Esophagus muscularis mucosa (tissue), 4 donors: ENCODE measurements at regions of chr1 and their contacts with region 1.

Region 1: DNA sequence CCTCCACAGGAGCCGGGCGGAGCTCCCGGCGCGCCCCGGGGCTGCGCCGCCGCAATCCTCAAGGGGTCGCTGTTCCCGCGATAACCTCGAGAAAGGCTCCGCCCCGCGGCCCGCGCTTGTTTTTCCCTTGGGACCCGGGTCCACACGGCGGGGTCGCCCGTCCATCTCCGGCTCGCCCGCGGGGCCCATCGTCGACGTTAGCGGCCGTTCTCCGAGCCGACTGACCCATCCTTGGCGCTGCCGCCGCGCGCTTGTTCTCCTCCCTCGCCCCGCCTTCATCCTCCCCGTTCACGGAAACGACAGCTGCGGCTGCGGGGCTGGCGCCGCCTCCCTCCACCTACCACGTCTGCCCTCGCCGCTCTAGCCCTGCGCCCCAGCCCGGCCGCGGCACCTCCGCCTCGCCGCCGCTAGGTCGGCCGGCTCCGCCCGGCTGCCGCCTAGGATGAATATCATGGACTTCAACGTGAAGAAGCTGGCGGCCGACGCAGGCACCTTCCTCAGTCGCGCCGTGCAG is at the start of gene SH3GLB1:
- DNase-seq: peak; percentile 97
- H3K4me3 ChIP-seq: peak within 1 kb of the TSS; percentile 74 to 95 (median 94)
- H3K27ac ChIP-seq: peak within 1 kb of the TSS; percentile 91 to 98 (median 98)
- H3K4me1 ChIP-seq: peaks cover 36 to 49% (median 46%) of the 10 kb centered on the region in 4 donors
- H3K27me3 ChIP-seq: no peaks in the 10 kb centered on the region
- CTCF ChIP-seq: peak; percentile 83 to 94 (median 89)
- EP300 ChIP-seq: no peak
- POLR2A ChIP-seq: peak; percentile 4
- total RNA-seq, gene SH3GLB1: 56.2 to 73.1 (median 61.8) TPM

Region 2: DNA sequence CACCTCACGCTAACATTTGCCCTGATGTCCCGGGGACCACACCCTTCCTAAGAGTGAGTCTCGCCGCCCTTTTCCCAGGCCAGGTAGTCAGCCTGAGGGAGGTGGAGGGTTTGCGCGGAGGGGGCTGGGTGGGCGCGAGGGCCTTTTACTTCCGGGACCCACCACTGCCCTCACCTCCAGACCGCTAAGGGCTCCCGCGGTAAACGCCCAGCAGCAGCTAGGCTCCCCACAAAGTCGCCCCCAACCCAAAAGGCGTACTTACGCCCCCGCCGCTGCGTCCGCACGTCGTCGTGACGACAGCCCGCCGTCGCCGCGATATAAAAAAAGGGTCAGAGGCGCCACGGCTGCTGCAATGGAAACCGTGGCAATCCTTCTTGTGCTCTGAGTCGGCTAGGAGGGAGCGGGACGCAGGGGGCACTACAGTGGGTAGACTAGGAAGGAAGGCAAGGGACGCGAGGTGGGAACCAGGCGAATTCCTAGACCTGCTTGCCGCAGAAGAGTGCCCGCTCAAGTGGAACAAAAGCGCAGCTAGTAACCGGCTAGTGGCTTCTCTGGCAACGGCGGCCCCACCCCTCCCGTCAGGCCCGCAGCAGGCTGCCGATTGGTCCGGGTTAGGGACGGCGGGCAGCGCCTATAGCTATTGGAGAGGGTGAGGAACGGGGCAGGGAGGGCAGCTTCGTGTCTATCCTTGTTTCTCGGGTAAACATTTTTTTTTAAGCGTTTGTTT is 308.6 kb before region 1 on chr1 and contains the start of gene ODF2L:
- intact Hi-C with region 1: loop called (anchors 10 kb)
- DNase-seq: peak; percentile 97
- H3K4me3 ChIP-seq: peak within 1 kb of the TSS; percentile 79 to 93 (median 90)
- H3K27ac ChIP-seq: peak within 1 kb of the TSS; percentile 76 to 81 (median 79)
- H3K4me1 ChIP-seq: peaks cover 5 to 35% (median 28%) of the 10 kb centered on the region in 4 donors
- H3K27me3 ChIP-seq: no peaks in the 10 kb centered on the region
- CTCF ChIP-seq: no peak
- EP300 ChIP-seq: no peak
- POLR2A ChIP-seq: no peak
- total RNA-seq, gene ODF2L: 11.6 to 18.7 (median 13.3) TPM

Region 3: GRCh38 chr1:86913896-86914634 is 209.6 kb after region 1 on chr1 and contains the start of gene SELENOF:
- intact Hi-C with region 1: loop called (anchors 10 kb)
- DNase-seq: peak; percentile 100
- H3K4me3 ChIP-seq: peak within 1 kb of the TSS; percentile 76 to 92 (median 86)
- H3K27ac ChIP-seq: peak within 1 kb of the TSS; percentile 86 to 94 (median 89)
- H3K4me1 ChIP-seq: peaks cover 16 to 45% (median 39%) of the 10 kb centered on the region in 4 donors
- H3K27me3 ChIP-seq: no peaks in the 10 kb centered on the region
- CTCF ChIP-seq: no peak
- EP300 ChIP-seq: no peak
- POLR2A ChIP-seq: no peak
- total RNA-seq, gene SELENOF: 76.8 to 103 (median 89.4) TPM